HAP-1 (cell line): ENCODE measurements at regions of chr9 and their contacts with region 1.

Region 1: DNA sequence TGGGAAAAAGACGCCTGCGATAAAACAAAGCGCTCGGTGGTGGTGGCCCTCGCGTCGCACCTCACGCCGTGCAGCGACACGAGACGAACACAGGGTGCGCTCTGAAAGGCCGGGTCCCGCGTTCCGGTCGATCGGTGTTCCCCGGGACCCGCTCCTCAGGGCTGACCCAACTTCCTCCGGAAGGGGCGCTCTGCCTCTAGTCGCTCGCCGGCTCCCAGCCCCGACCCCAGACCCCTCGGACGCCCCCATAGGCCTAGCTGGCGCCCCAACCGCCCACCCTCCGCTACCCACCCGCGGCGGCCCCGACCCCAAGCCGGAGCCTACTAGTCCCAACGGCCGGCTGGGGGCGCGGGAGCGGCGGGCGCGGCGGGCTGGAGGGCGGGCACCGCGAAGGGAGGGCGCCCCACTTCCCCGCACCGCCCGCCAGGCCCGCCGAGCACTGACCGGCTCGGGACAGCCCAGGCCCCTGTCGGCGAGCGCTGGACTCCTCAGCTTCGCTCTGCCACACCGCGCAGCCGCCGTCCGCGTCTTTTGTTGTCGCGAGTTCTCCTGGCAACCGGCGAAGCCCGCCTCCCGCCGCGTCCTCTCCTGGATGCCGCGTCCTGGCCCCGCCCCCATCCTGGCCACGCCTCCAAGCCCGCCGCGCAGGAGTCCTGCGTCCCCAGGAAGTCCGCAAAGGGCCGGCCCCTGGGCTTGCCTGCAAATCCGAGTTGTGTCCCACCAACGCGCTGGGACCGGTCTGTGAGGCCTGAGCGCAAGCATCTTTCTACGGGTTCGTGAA is at the start of gene KIF27:
- DNase-seq: peak; percentile 92 to 99
- H3K4me3 ChIP-seq: peak within 1 kb of the TSS; percentile 46
- H3K4me1 ChIP-seq: peaks cover 8% of the 10 kb centered on the region
- H3K27me3 ChIP-seq: no peaks in the 10 kb centered on the region

Region 2: GRCh38 chr9:83219152-83219923 is 701.8 kb before region 1 on chr9:
- in situ Hi-C with region 1: loop called (anchors 25 kb)
- DNase-seq: peak; percentile 58 to 81
- H3K4me3 ChIP-seq: peak overlapping the region; percentile 37
- H3K4me1 ChIP-seq: no peaks in the 10 kb centered on the region
- H3K27me3 ChIP-seq: no peaks in the 10 kb centered on the region

Region 3: GRCh38 chr9:83334320-83334719 is 586.8 kb before region 1 on chr9:
- in situ Hi-C with region 1: loop called (anchors 25 kb)
- DNase-seq: peak; percentile 64 to 88
- H3K4me3 ChIP-seq: no peak overlapping the region
- H3K4me1 ChIP-seq: no peaks in the 10 kb centered on the region
- H3K27me3 ChIP-seq: no peaks in the 10 kb centered on the region

Region 4: GRCh38 chr9:83649080-83649479 is 272.0 kb before region 1 on chr9:
- in situ Hi-C with region 1: loop called (anchors 25 kb)
- DNase-seq: peak; percentile 58 to 85
- H3K4me3 ChIP-seq: no peak overlapping the region
- H3K4me1 ChIP-seq: no peaks in the 10 kb centered on the region
- H3K27me3 ChIP-seq: no peaks in the 10 kb centered on the region

Region 5: DNA sequence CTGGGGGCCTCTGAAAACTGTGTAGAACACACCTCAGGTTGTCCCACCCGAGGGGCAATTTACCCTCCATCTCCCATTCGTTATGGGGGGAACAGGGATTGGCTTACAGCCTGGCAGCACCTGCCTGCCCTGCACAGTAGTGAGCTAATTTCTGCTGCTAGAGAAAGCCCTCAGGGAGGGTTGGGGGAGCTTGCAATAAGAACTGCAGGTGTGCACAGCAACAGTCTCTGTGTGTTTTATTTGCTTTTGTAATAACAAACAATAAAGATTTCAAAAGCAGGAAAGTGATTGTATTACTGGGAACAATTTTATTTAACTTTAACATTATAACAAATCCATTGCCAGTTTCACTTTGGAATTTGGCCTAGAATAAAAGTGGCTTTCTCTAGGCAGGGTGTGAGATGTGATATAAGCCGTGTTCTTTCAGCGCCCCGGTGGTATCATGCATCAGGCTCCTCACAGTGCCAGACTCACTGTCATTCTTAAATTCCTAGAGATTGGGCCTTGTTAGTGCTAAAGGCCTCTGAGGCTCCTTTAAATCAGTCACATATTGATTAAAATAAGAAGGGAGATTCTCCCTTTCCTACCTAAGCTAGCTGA is 140.6 kb after region 1 on chr9:
- in situ Hi-C with region 1: no loop called
- DNase-seq: peak in 1 of 2 experiments; percentile 24
- H3K4me3 ChIP-seq: no peak overlapping the region
- H3K4me1 ChIP-seq: peaks cover 11% of the 10 kb centered on the region
- H3K27me3 ChIP-seq: no peaks in the 10 kb centered on the region